Left cardiac atrium (tissue), 4 donors: ENCODE measurements at regions of chr20 and their contacts with region 1.

Region 1: GRCh38 chr20:21235484-21236445 is 67.4 kb upstream of the XRN2 start:
- DNase-seq: peak; percentile 54
- ATAC-seq: peak; percentile 57 to 62

Region 2: GRCh38 chr20:21294755-21295154 is 59.0 kb after region 1 on chr20:
- intact Hi-C with region 1: loop called in 1 of 2 experiments (anchors 5 kb)
- DNase-seq: no peak
- ATAC-seq: peak in 1 of 2 donors; percentile 42

Region 3: DNA sequence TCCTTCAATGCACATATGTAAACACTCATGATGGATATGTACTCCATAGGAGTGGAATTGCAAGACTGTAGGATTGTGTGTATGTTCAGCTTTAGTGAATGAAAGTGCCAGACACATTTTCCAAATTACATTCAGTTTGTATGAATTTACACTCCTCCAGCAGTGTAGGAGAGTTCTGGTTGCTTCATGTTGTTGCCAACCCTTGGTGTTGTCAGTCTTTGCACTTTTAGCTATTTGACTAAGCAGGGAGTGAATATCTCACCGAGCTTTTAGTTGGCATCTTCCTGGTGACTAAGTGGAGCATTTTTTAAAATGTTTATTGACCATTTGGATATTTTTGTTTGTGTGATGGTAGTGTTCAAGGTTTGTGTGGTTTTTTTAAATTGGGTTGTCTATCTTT is 137.7 kb after region 1 on chr20:
- intact Hi-C with region 1: loop called in 1 of 2 experiments (anchors 10 kb)
- DNase-seq: no peak
- ATAC-seq: no peak